ENCODE measurements at regions of chr15 and their contacts with region 1.

Region 1: GRCh38 chr15:51853998-51854397 is 24.5 kb downstream of the TMOD3 start:
- DNase-seq: no peak
- ATAC-seq: no peak
- H3K4me3 Mint-ChIP-seq: no peak overlapping the region
- H3K27ac Mint-ChIP-seq: no peak overlapping the region
- H3K4me1 Mint-ChIP-seq: peaks cover 38% of the 10 kb centered on the region
- H3K27me3 Mint-ChIP-seq: no peaks in the 10 kb centered on the region
- CTCF ChIP-seq: no peak

Region 2: GRCh38 chr15:51737280-51738017 is 116.5 kb before region 1 on chr15 and contains the start of gene LYSMD2:
- CTCF ChIA-PET with region 1: no interaction called
- POLR2A ChIA-PET with region 1: no interaction called
- DNase-seq: peak; percentile 52
- ATAC-seq: peak; percentile 63
- H3K4me3 Mint-ChIP-seq: peak within 1 kb of the TSS; percentile 71
- H3K27ac Mint-ChIP-seq: no peak within 1 kb of the TSS
- H3K4me1 Mint-ChIP-seq: peaks cover 13% of the 10 kb centered on the region
- H3K27me3 Mint-ChIP-seq: peaks cover 44% of the 10 kb centered on the region
- CTCF ChIP-seq: no peak
- total RNA-seq, gene LYSMD2: 2.2 to 2.7 TPM (median 2.6 TPM) in 3 replicates

Region 3: DNA sequence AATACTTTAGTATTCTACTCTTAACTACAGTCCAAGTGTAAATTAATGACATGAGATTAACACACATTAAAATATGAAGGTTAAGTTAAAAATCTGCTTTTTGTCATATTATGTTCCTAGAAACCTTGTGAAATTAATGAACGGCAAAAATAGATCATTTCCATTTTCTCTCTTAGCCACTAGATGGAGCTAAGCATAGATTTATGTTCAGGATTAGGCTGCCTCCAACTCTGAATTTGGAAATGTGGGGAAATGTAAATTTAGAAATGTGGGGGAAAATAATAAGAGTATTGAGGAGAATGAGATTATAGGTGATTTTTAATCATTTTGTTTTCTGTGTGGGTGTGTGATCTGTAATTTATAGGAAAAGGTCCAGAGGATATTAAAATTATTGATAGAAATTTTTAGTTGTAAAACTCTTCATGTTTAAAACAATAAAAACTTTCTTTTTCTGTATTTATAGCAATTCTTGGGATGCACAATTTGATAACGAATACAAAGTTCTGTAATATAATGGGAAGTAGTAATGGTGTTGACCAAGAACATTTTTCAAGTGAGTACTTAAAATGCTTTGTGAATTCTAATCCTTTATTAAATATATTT is 34.7 kb after region 1 on chr15:
- CTCF ChIA-PET with region 1: interaction called, 14 read pairs
- POLR2A ChIA-PET with region 1: no interaction called
- DNase-seq: no peak
- ATAC-seq: no peak
- H3K4me3 Mint-ChIP-seq: no peak overlapping the region
- H3K27ac Mint-ChIP-seq: no peak overlapping the region
- H3K4me1 Mint-ChIP-seq: no peaks in the 10 kb centered on the region
- H3K27me3 Mint-ChIP-seq: no peaks in the 10 kb centered on the region
- CTCF ChIP-seq: no peak

Measured in WTC11 (cell line).